Activated CD4-positive, alpha-beta T cell treated with anti-CD3 and anti-CD28 coated beads for 36 hours (primary cell): ENCODE measurements at regions of chr6 and their contacts with region 1.

Region 1: DNA sequence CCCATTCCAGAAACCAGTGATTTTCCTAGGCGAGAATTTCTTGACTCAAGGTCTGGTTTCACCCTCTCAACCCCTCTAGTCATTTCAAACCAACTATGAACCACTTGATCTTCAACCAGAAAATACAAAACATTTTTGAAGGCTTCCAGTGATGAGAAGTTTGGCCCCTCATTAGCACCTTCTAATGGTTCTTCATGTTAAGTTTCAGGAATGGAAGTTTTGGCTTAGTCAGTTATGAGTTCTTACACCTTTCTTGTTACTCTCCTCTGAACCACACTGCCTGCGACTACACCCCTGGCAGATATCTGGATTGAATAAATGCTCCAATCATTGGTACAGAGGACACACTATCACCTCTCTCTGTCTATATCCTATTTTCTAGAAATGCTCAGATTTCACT is 67.2 kb downstream of the GJA10 start:
- DNase-seq: peak; percentile 36
- ATAC-seq: peak; percentile 60
- H3K4me3 Mint-ChIP-seq: no peak overlapping the region
- H3K27ac Mint-ChIP-seq: peak overlapping the region; percentile 63
- H3K4me1 Mint-ChIP-seq: peaks cover 94% of the 10 kb centered on the region
- H3K27me3 Mint-ChIP-seq: no peaks in the 10 kb centered on the region

Region 2: GRCh38 chr6:89977808-89978748 is 16.6 kb after region 1 on chr6:
- CTCF ChIA-PET with region 1: interaction called, 5 read pairs
- POLR2A ChIA-PET with region 1: no interaction called
- intact Hi-C with region 1: loop called in 1 of 2 experiments (anchors 1 kb)
- DNase-seq: no peak
- ATAC-seq: no peak
- H3K4me3 Mint-ChIP-seq: no peak overlapping the region
- H3K27ac Mint-ChIP-seq: no peak overlapping the region
- H3K4me1 Mint-ChIP-seq: peaks cover 47% of the 10 kb centered on the region
- H3K27me3 Mint-ChIP-seq: no peaks in the 10 kb centered on the region

Region 3: GRCh38 chr6:90044833-90045381 is 83.4 kb after region 1 on chr6:
- CTCF ChIA-PET with region 1: no interaction called
- POLR2A ChIA-PET with region 1: no interaction called
- intact Hi-C with region 1: no loop called
- DNase-seq: no peak
- ATAC-seq: peak; percentile 34
- H3K4me3 Mint-ChIP-seq: no peak overlapping the region
- H3K27ac Mint-ChIP-seq: peak overlapping the region; percentile 63
- H3K4me1 Mint-ChIP-seq: peaks cover 38% of the 10 kb centered on the region
- H3K27me3 Mint-ChIP-seq: no peaks in the 10 kb centered on the region